Posterior vena cava (tissue), 2 donors: ENCODE measurements at regions of chr1 and their contacts with region 1.

Region 1: DNA sequence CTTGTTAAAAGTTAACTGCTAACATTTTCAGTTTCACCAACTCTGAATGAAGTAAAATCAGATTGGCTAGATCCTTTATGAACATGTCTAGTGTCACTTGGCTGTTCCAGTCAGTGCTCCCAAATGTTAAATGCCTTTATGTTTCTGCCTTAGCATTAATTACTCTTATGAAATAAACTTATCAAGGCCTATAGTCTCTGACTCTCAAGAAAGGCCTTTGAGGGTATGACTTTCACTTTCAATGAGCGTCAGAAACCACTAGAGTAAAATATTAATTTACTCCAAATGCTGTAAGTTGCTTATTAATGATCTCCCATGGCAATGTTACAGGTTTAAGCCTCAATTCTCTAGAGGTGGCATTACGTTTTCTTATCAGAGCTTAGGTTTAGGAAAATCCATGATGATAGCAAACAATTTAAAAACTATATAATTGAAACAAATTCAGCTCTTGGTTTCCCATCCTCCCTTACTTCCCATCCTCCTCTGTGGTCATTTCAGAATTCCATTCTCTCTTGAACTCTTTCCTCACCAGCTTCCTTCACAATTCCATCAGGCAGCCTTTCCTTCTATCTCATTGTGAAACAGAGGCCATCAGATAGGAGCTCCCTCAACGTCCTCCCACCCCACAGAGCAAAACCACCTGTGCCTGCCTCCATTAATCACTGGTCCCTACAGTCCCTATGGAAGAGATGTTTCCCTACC is 108.6 kb upstream of the COP1 start:
- DNase-seq: no peak

Region 2: DNA sequence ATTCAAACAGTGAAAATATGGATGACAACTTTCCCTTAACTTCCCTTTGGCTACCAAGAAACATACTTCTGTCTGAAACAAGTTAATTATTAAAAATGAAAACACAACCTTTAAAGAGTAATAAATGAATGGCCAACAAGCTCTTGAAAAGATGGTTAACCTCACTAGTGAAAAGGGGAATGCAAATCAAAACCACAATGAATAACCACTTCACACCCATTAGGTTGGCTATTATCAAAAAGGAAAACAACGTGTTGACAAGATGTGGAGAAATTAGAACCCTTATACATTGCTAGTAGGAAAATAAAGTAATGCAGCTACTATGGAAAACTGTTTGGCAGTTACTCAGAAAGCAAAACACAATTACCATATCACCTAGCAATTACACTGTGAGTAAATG is 122.6 kb before region 1 on chr1:
- intact Hi-C with region 1: no loop called
- DNase-seq: no peak

Region 3: DNA sequence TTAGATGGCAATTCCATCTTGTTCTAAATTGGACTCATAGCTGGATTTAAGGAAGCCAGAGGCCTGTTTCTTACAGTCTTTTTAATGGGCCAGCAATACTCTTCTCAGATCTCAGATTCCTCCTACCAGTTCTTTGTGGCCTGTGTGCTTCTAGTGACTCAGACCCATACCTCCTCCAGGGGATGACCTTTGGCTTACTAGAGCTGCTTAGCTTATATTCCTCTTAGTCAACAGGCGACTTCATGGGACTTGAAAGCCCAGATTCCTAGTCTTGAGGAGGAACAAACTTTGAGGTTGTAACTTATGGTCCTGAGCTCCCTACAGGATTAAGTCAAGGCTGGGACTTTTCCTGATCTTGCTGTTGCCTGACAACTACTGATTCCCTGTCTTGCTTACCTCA is 134.9 kb after region 1 on chr1:
- intact Hi-C with region 1: no loop called
- DNase-seq: no peak

Region 4: DNA sequence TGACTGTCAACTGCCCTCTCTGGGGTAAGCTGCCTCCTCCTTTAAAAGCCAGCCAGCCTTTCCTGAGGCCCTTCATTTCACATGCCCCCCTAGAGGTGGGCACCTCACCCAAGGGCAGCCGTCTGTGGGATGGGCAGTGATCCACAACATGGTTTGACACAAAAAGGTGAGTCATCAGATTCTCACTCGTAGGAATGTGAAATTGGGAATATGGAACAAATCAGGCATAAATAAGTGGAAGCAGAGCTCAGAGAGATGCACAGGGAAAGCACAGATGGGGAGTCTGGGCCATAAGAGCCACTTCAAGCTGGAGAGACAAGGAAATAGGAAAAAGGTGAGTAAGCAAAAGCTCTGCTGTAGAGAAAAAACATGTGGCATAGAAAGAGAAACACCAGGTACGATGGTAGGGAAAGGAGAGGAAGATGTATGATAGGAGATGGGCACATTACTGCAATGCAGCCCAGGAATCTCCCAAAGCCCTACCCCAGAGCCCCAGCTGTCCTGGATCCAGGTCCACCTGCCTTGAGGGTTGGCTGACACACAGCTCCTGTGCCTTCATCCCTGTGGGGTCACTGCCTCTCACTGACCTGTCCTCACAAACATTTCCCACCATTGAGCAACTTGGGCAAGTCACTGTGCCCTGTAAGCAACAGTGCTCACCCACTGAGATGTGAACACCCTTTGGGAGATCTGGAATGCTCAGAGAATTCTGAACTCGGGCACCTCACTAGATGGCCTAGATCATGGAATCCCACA is 762.2 kb after region 1 on chr1:
- intact Hi-C with region 1: loop called in 1 of 2 experiments (anchors 5 kb)
- DNase-seq: no peak